RWPE1 (cell line): ENCODE measurements at regions of chr15 and their contacts with region 1.

Region 1: GRCh38 chr15:89430530-89431341 is 65.6 kb downstream of the RHCG start:
- DNase-seq: peak; percentile 88
- H3K27ac ChIP-seq: no peak overlapping the region
- CTCF ChIP-seq: peak; percentile 98

Region 2: DNA sequence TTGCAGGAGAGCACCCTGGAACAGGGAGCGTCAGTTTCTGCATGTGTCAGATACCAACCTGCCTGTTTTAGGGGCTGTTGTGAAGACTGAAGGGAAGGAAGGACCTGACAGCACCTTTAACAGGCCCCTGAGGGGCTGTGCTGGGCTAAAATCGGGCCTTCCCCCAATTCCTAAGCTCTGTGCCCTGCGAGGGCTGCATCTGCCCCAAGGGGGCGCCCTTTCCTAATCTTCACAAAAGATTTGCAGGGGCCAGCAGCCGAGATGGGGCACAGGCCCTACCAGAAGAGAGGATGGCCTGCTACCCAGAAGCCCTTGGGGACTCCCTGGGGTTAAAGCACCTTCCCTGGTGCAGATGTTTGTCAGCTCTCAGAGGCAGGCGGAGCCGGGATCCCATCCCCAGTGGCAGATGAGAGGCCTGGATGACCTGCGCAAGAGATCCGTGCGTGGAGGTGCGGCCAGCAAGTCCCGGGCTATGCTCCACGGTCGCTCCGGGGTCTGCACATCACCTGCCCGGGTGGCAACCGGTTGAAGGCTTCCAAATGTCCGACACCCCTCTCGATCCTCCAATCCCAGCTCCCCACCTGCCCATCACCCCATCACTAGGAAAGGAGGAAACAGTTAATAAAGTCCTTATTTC is 12.1 kb after region 1 on chr15:
- CTCF ChIA-PET with region 1: interaction called, 11 read pairs
- POLR2A ChIA-PET with region 1: no interaction called
- DNase-seq: peak; percentile 61
- H3K27ac ChIP-seq: no peak overlapping the region
- CTCF ChIP-seq: peak; percentile 82

Region 3: DNA sequence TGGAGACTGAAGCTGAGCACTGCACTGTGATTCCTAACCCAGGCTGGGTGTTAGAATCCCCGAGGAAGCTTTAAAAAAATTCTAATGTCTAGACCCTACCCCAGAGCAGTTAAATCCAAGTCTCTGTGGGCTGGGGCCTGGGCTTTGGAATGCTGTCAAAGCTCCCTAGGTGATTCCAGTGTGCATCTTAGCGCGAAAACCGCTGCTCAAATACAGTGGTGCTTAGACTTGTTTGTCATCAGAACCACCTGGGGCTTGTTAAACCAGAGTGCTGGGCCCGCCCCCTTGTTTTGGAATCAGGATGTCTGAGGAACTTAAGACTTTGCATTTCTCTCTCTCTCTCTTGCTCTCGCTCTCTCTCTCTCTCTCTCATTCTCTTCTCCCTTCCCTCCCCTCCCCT is 44.9 kb after region 1 on chr15:
- CTCF ChIA-PET with region 1: no interaction called
- POLR2A ChIA-PET with region 1: no interaction called
- DNase-seq: no peak
- H3K27ac ChIP-seq: no peak overlapping the region
- CTCF ChIP-seq: no peak